ENCODE measurements at regions of chr6 and their contacts with region 1.

Region 1: DNA sequence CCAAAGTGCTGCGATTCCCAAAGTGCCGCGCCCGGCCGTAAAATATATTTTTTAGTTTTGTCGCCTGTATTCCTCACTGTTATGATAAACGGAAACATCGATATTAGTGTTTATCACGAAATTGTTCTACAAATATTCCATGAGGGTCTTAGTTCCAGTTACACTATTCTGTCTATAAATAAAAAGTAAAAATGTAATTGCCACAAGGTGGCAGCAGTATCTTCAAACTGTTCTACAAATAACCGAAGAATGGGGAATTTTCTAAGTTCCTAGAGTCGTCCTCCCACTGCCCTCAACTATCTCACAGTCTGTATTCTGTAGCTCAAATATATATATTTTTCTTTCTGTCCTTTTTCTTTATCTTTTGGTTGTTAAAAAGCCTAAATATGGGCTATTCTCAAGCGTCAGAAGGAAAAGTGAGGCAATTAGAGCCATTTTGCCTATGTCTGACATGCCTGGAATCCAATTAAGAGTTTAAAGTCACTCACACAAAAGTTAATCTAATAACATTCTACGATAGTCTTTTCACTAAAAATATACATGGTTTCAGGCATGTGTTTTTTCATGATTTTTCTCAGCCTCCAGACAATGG is 14.2 kb upstream of the FAM162B start:
- DNase-seq: no peak
- ATAC-seq: no peak
- H3K4me3 Mint-ChIP-seq: no peak overlapping the region
- H3K27ac Mint-ChIP-seq: no peak overlapping the region
- H3K4me1 Mint-ChIP-seq: no peaks in the 10 kb centered on the region
- H3K27me3 Mint-ChIP-seq: peaks cover 12% of the 10 kb centered on the region
- CTCF ChIP-seq: no peak

Region 2: DNA sequence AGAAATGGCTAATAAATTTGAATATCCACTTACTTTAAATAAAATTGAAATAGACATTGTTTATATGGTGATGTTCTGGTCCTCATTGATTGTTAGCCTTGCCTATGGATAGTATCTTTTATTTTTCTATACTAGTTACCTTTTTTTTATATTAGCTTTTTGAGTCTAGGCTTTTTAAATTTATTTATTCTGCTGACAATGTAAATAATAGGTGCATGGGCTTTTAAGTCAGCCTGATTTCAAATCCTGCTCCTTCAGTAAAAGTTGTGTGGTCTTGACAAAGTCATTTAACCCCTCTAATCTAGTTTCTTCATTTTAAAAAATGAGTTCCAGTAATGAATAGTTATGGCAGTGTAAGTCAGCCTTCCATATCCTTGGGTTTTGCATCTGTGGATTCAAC is 52.7 kb before region 1 on chr6:
- CTCF ChIA-PET with region 1: no interaction called
- POLR2A ChIA-PET with region 1: no interaction called
- intact Hi-C with region 1: no loop called
- DNase-seq: no peak
- ATAC-seq: no peak
- H3K4me3 Mint-ChIP-seq: no peak overlapping the region
- H3K27ac Mint-ChIP-seq: no peak overlapping the region
- H3K4me1 Mint-ChIP-seq: no peaks in the 10 kb centered on the region
- H3K27me3 Mint-ChIP-seq: no peaks in the 10 kb centered on the region
- CTCF ChIP-seq: no peak

Region 3: DNA sequence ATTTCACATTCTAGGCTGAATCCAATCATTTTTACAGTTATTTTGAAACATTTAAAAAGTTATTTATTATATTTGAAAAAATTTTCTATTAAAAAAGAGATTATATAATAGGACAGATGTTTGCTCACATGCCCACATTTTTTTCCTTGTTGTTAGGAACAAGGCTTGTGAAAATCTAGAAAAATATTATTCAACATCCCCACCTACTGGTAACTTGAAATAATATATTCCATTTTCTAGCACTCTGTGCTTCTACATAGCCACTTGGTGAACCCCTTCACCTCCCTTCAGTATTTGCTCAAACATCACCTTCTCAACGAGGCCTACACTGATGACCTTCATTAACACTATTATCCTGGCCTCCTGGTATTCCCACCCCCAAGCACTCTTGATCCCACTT is 67.6 kb after region 1 on chr6:
- CTCF ChIA-PET with region 1: no interaction called
- POLR2A ChIA-PET with region 1: no interaction called
- intact Hi-C with region 1: loop called (anchors 1 kb)
- DNase-seq: no peak
- ATAC-seq: no peak
- H3K4me3 Mint-ChIP-seq: no peak overlapping the region
- H3K27ac Mint-ChIP-seq: no peak overlapping the region
- H3K4me1 Mint-ChIP-seq: no peaks in the 10 kb centered on the region
- H3K27me3 Mint-ChIP-seq: peaks cover 3% of the 10 kb centered on the region
- CTCF ChIP-seq: no peak

Region 4: DNA sequence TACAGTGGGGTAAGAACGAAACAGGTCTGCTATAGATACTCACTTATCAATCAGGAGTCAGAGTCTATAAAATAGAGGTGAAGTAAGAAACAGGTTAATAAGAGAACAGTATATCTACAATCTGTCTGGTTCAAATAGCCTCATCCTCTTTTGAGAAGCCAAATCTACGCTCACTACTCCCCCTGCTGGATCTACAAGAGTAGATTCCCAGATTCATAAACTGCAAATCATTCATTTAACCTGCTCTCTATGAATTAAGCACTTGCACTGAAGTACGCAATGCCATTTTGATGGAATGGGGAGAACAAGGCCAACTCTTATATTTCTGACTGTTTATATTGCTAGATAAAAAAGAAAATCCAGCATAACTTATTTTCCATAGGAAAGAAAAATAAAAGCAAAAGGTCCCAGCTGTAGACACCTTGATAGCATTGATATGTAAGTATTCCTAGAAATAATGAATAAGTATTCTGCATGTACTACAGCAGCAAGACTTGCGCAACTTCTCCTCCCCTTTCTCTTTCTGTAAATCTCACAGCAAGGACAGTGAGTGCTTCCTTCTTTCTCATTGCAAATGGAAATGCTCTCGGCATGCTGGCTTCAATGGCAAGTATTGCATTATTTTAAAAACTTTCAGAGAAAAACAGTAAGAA is 189.7 kb after region 1 on chr6:
- CTCF ChIA-PET with region 1: no interaction called
- POLR2A ChIA-PET with region 1: no interaction called
- intact Hi-C with region 1: loop called (anchors 1 kb)
- DNase-seq: no peak
- ATAC-seq: no peak
- H3K4me3 Mint-ChIP-seq: no peak overlapping the region
- H3K27ac Mint-ChIP-seq: no peak overlapping the region
- H3K4me1 Mint-ChIP-seq: no peaks in the 10 kb centered on the region
- H3K27me3 Mint-ChIP-seq: peaks cover 10% of the 10 kb centered on the region
- CTCF ChIP-seq: peak; percentile 52

Measured in activated B cell treated with CpG ODN at 0.5 μM for 24 hours (primary cell).